GM12878 (cell line): ENCODE measurements at regions of chr19 and their contacts with region 1.

Region 1: GRCh38 chr19:30017172-30017571 is 75.1 kb downstream of the URI1 start:
- DNase-seq: peak; percentile 50
- ATAC-seq: peak; percentile 99
- H3K4me3 ChIP-seq: no peak overlapping the region
- H3K27ac ChIP-seq: no peak overlapping the region
- H3K4me1 ChIP-seq: peaks cover 11% of the 10 kb centered on the region
- H3K27me3 ChIP-seq: no peaks in the 10 kb centered on the region
- CTCF ChIP-seq: no peak
- EP300 ChIP-seq: peak in 1 of 2 experiments; percentile 88; a peak in 2 of 4 replicates
- POLR2A ChIP-seq: no peak
- RAD21 ChIP-seq: no peak

Region 2: DNA sequence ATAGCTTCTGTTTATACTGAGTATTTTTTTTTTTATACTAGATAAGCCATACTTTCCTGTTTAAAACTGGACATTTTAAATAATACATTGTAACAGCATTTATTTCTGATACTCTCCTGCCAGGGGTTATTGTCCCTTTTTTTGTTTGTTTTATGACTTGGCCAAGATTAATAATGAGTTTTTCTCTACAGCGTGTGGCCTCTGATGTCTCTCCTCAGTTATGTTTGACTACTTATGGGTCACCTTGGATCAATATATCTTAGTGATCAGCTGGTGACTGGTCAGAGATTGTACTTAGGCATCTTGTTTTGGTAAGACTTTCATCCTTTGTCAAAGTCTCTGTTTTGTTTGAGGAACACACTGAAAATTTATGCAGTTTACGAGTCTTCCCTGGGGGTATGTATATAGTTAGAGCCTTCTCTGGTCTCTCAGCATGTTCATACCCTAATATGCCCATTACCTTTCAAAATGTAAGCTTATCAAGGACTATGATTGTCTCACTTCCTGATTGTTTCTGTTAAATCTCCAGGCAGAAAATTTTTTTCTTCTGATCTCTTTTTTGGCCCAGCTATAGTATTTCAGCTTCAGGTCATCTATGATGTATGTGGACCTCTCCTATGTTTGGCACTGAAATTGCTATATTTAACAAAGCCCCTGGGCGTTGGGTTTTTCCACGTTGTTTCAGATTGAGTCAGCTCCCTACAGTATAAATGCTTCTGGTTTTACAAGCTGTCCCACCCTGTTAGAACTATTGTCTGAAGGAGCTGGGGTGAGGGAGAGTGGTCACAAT is 12.7 kb after region 1 on chr19:
- CTCF ChIA-PET with region 1: interaction called, 8 read pairs
- POLR2A ChIA-PET with region 1: interaction called, 3 read pairs
- RAD21 ChIA-PET with region 1: interaction called, 4 read pairs
- SMC1A ChIA-PET with region 1: interaction called, 18 read pairs
- in situ Hi-C with region 1: no loop called
- intact Hi-C with region 1: loop called (anchors 2 kb)
- DNase-seq: peak; percentile 90
- ATAC-seq: peak; percentile 97
- H3K4me3 ChIP-seq: no peak overlapping the region
- H3K27ac ChIP-seq: peak overlapping the region; percentile 85
- H3K4me1 ChIP-seq: peaks cover 18% of the 10 kb centered on the region; the same call in 1 of the 2 replicates
- H3K27me3 ChIP-seq: no peaks in the 10 kb centered on the region
- CTCF ChIP-seq: no peak
- EP300 ChIP-seq: peak; percentile 77 to 91
- POLR2A ChIP-seq: no peak
- RAD21 ChIP-seq: no peak